ENCODE measurements at regions of chr5 and their contacts with region 1.

Region 1: DNA sequence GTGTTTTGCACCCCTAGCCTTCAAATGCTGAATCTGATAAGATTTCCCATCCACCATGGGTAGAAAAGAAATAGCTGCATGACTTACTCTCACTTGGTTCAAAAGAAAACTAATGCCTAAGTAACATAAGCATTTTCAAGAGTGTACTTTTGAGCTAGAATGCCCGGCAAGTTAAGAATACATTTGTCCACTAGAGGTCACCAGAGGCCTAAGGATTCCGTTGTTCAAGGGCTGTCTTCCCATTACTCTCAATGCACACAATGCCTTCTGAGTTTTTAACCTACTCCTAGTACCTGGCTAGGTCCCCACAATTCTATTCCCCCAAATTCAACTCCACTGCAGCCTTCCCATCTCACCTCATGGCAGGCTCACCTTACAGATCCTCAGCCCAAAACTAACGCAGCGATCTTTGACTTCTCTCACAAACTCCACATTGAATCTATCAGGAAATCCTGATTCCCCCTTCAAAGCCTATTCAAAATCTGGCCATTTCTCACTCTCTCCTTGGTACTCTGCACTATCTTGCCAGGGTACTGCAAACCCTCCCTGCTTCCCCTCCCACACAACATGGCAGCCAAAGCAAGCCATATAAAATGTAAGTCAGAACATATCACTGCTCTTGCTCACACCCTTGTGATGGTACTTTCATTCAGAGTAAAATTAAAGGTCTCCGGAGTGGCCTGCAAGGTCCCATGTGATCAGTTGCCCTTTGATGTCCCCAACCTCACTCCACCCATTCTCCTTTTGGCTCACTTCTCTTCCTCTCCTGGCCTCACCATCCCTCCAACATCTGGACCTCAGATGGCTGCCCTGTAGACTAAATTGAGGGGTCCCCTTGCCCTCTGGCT is 13.4 kb downstream of the OXCT1 start:
- DNase-seq: peak; percentile 51
- H3K4me3 ChIP-seq: no peak overlapping the region
- H3K27ac ChIP-seq: no peak overlapping the region
- H3K4me1 ChIP-seq: no peaks in the 10 kb centered on the region; a peak in 1 of 4 replicates
- H3K27me3 ChIP-seq: no peaks in the 10 kb centered on the region
- CTCF ChIP-seq: peak; percentile 82
- EP300 ChIP-seq: no peak
- RAD21 ChIP-seq: peak; percentile 92

Region 2: GRCh38 chr5:41043109-41043747 is 813.6 kb before region 1 on chr5:
- CTCF ChIA-PET with region 1: no interaction called
- POLR2A ChIA-PET with region 1: no interaction called
- DNase-seq: no peak
- H3K4me3 ChIP-seq: no peak overlapping the region
- H3K27ac ChIP-seq: no peak overlapping the region
- H3K4me1 ChIP-seq: no peaks in the 10 kb centered on the region
- H3K27me3 ChIP-seq: no peaks in the 10 kb centered on the region
- CTCF ChIP-seq: no peak
- EP300 ChIP-seq: no peak
- RAD21 ChIP-seq: no peak

Region 3: GRCh38 chr5:41869739-41870626 is 13.1 kb after region 1 on chr5 and contains the start of gene OXCT1:
- CTCF ChIA-PET with region 1: interaction called, 46 read pairs
- POLR2A ChIA-PET with region 1: no interaction called
- DNase-seq: peak; percentile 88
- H3K4me3 ChIP-seq: peak within 1 kb of the TSS; percentile 85 to 91
- H3K27ac ChIP-seq: peak within 1 kb of the TSS; percentile 72 to 89
- H3K4me1 ChIP-seq: peaks cover 6 to 12% of the 10 kb centered on the region in 2 experiments; a peak in 1 of 4 replicates
- H3K27me3 ChIP-seq: no peaks in the 10 kb centered on the region
- CTCF ChIP-seq: no peak
- EP300 ChIP-seq: no peak
- RAD21 ChIP-seq: no peak
- polyA plus RNA-seq, gene OXCT1: 11.7 and 14.9 TPM in 2 replicates

Region 4: DNA sequence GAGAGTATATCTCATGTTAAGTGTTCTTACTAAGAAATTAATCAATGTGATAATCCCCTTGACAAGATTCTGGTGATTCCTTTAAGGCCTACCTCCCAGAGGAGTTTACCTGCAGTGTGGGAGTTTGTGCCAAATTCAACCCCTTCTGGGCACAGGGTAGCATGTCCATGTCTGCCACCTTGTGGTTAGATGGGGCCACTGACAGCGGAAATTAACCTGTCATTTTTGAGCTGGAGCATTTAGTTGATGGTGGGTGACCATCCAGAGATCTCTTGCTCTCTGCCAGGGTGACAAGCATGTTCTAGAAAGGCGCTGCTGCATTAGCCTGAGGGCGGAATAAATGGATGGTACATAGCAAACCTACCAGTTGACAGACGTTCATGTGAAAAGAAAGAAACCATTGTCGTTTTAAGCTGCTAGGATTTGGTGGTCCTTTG is 200.4 kb after region 1 on chr5:
- CTCF ChIA-PET with region 1: interaction called, 126 read pairs
- POLR2A ChIA-PET with region 1: no interaction called
- DNase-seq: peak; percentile 46
- H3K4me3 ChIP-seq: peak overlapping the region in 1 of 2 experiments; percentile 10; a peak in 1 of 4 replicates
- H3K27ac ChIP-seq: no peak overlapping the region
- H3K4me1 ChIP-seq: no peaks in the 10 kb centered on the region; a peak in 1 of 4 replicates
- H3K27me3 ChIP-seq: no peaks in the 10 kb centered on the region; the same call in 1 of the 2 replicates
- CTCF ChIP-seq: peak; percentile 72
- EP300 ChIP-seq: no peak
- RAD21 ChIP-seq: peak; percentile 70

Region 5: GRCh38 chr5:42583322-42583721 is 726.5 kb after region 1 on chr5:
- CTCF ChIA-PET with region 1: interaction called, 11 read pairs
- POLR2A ChIA-PET with region 1: no interaction called
- DNase-seq: peak; percentile 37
- H3K4me3 ChIP-seq: no peak overlapping the region; a peak in 1 of 4 replicates
- H3K27ac ChIP-seq: no peak overlapping the region
- H3K4me1 ChIP-seq: no peaks in the 10 kb centered on the region
- H3K27me3 ChIP-seq: no peaks in the 10 kb centered on the region; the same call in none of the 2 replicates
- CTCF ChIP-seq: peak; percentile 85
- EP300 ChIP-seq: no peak
- RAD21 ChIP-seq: peak; percentile 59